Activated CD4-positive, alpha-beta memory T cell treated with anti-CD3 and anti-CD28 coated beads, Interleukin-2, amount 10 ng/mL, durations not matched to agents 7 days and 5 days (primary cell): ENCODE measurements at regions of chr7 and their contacts with region 1.

Region 1: DNA sequence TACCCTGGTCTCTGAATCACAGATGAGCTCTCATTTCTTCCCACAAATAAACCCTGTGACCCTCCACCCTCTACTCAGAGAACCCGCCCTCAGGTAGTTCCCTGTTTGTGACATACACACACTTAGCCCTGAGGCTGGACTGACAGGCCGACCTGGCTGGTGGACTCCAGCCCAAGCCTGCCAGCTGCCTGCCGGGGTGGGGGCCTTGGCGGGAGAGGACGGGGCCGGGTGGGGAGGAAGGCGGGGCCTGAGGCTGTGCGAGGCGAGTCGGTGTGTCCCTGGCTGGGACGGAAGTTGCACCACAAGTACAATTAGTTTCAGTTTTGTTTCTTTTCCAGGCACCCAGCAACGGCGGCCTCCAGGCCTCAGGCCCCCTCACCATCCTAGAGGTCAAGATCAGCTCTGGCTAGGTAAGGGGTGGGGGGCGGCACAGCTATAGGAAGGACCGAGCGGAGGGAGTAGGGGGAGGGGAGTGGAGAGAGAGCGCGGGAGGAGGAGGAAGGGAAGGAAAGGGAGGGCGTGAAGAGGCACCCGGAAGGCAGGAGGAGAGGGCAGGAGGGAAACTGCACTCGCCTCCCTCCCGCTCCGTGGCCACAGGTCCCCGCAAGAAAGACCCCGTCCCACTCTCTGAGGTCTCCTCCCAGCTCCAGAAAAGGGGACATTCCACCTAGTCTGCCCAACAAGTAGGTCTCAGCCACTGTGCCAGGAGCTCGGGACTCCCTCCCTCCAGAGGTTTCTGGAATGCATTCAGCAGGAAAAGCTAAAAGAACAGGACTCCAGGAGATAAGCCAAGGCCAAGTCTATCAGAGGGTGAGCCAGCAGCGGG is at the start of gene TRIM56:
- DNase-seq: peak; percentile 86
- H3K4me3 Mint-ChIP-seq: peak within 1 kb of the TSS; percentile 97
- H3K27ac Mint-ChIP-seq: peak within 1 kb of the TSS; percentile 97
- H3K4me1 Mint-ChIP-seq: peaks cover 34% of the 10 kb centered on the region
- H3K27me3 Mint-ChIP-seq: peaks cover 5% of the 10 kb centered on the region
- total RNA-seq, gene TRIM56: 72.6 to 72.7 TPM

Region 2: DNA sequence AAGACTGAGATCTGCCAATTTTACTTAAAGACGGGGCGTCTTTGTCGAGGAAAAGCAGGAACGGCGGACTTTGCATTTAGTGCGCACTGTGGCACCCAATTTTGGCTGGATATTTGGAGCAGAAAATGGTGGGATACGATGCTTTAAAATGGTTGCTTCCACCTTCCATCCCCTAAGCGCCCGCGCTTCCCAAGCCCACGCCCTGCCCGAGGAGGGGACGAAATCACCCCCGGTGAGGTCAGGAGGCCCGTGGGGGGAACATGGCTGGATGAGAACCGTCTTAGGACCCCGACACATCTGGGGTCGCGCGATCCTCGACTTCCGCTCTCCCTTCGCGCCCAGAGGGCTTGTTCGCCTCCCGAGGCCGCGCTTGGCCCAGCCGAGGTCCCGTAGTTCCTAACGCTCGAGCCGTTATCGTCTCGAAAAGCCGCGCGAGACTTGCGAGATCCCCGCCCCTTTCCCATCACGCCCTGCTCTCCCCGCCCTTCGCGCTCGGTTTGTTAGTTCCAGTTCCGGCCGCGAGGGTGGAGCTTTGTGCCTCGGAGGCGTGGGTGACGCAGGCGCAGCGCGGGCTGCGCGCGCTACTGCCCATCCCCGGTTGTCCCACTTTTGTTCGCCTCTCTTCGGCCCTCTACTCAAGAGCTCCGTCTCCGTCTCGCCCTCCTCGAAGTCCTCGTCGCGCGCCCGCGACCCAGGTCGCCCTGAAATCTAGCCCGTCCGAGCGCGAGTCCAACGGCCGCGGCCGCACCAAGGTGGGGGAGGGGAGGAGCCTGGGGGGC is 210.6 kb before region 1 on chr7 and contains the start of gene SRRT:
- CTCF ChIA-PET with region 1: no interaction called
- POLR2A ChIA-PET with region 1: interaction called, 17 read pairs
- DNase-seq: peak; percentile 99
- H3K4me3 Mint-ChIP-seq: peak within 1 kb of the TSS; percentile 98
- H3K27ac Mint-ChIP-seq: peak within 1 kb of the TSS; percentile 97
- H3K4me1 Mint-ChIP-seq: peaks cover 60% of the 10 kb centered on the region
- H3K27me3 Mint-ChIP-seq: no peaks in the 10 kb centered on the region
- total RNA-seq, gene SRRT: 202 to 205 TPM

Region 3: GRCh38 chr7:100889761-100890634 is 195.4 kb before region 1 on chr7:
- CTCF ChIA-PET with region 1: interaction called, 7 read pairs
- POLR2A ChIA-PET with region 1: interaction called, 10 read pairs
- DNase-seq: peak; percentile 92
- H3K4me3 Mint-ChIP-seq: peak overlapping the region; percentile 78
- H3K27ac Mint-ChIP-seq: peak overlapping the region; percentile 16
- H3K4me1 Mint-ChIP-seq: peaks cover 52% of the 10 kb centered on the region
- H3K27me3 Mint-ChIP-seq: peaks cover 32% of the 10 kb centered on the region

Region 4: DNA sequence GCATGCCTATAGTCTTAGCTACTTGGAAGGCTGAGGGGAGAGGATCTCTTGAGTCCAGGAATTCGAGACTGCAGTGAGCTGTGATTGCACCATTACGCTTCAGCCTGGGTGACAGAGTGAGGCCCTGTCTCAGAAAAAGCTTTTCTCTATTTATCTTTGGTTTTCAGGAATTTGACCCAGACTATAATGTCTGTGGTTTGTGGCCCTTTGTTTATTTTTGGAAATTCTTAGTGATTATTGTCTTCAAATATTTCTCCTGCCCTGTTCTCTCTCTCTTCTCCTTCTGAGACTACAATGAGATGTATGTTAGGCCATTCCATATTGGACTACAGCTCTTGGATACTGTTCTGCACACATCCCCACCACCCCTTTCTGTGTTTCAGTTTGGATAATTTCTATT is 111.4 kb before region 1 on chr7:
- CTCF ChIA-PET with region 1: no interaction called
- POLR2A ChIA-PET with region 1: no interaction called
- DNase-seq: no peak
- H3K4me3 Mint-ChIP-seq: no peak overlapping the region
- H3K27ac Mint-ChIP-seq: no peak overlapping the region
- H3K4me1 Mint-ChIP-seq: no peaks in the 10 kb centered on the region
- H3K27me3 Mint-ChIP-seq: peaks cover 13% of the 10 kb centered on the region

Region 5: DNA sequence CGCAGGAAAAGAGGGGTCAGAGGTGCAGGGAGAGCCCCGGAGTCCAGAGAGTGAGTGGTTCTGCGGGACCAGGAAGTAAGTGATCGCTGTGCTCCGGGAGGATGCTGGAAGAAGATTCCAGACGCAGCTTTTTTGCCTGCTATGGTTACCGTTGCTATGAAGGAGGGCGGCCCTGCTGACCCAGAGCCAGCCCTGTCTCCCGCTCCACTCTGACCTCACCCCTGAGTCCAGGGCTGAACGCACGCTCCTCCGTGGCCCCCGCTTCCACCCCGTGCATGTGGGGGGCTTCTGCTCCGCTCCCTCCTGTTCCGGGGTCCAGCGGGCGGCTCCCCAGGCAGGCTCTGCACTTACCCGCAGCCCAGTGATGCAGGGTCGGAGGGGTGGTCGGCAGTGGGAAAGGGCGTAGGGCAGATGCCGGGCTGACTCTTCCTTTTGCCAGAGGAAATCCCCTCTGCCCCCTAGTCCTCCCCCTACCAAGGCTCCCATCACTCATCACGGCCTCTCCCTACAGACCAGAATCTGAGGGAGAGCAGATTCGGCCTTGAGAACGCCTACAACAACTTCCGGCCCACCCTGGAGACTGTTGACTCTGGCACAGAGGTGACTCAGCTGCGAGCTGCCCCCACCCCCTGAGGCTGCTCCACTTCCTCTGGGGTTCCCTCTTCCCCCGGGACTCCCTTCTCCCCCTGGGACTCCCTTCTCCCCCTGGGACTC is 68.2 kb before region 1 on chr7:
- CTCF ChIA-PET with region 1: no interaction called
- POLR2A ChIA-PET with region 1: interaction called, 17 read pairs
- DNase-seq: peak; percentile 85
- H3K4me3 Mint-ChIP-seq: peak overlapping the region; percentile 91
- H3K27ac Mint-ChIP-seq: peak overlapping the region; percentile 93
- H3K4me1 Mint-ChIP-seq: peaks cover 22% of the 10 kb centered on the region
- H3K27me3 Mint-ChIP-seq: peaks cover 5% of the 10 kb centered on the region

Region 6: GRCh38 chr7:101099969-101100781 is 14.8 kb after region 1 on chr7:
- CTCF ChIA-PET with region 1: interaction called, 13 read pairs
- POLR2A ChIA-PET with region 1: interaction called, 20 read pairs
- DNase-seq: peak; percentile 57
- H3K4me3 Mint-ChIP-seq: no peak overlapping the region
- H3K27ac Mint-ChIP-seq: no peak overlapping the region
- H3K4me1 Mint-ChIP-seq: peaks cover 8% of the 10 kb centered on the region
- H3K27me3 Mint-ChIP-seq: peaks cover 34% of the 10 kb centered on the region

Region 7: GRCh38 chr7:101273206-101273605 is 187.8 kb after region 1 on chr7:
- CTCF ChIA-PET with region 1: no interaction called
- POLR2A ChIA-PET with region 1: no interaction called
- DNase-seq: no peak
- H3K4me3 Mint-ChIP-seq: no peak overlapping the region
- H3K27ac Mint-ChIP-seq: no peak overlapping the region
- H3K4me1 Mint-ChIP-seq: no peaks in the 10 kb centered on the region
- H3K27me3 Mint-ChIP-seq: peaks cover 5% of the 10 kb centered on the region